ENCODE measurements at regions of chr9 and their contacts with region 1.

Region 1: DNA sequence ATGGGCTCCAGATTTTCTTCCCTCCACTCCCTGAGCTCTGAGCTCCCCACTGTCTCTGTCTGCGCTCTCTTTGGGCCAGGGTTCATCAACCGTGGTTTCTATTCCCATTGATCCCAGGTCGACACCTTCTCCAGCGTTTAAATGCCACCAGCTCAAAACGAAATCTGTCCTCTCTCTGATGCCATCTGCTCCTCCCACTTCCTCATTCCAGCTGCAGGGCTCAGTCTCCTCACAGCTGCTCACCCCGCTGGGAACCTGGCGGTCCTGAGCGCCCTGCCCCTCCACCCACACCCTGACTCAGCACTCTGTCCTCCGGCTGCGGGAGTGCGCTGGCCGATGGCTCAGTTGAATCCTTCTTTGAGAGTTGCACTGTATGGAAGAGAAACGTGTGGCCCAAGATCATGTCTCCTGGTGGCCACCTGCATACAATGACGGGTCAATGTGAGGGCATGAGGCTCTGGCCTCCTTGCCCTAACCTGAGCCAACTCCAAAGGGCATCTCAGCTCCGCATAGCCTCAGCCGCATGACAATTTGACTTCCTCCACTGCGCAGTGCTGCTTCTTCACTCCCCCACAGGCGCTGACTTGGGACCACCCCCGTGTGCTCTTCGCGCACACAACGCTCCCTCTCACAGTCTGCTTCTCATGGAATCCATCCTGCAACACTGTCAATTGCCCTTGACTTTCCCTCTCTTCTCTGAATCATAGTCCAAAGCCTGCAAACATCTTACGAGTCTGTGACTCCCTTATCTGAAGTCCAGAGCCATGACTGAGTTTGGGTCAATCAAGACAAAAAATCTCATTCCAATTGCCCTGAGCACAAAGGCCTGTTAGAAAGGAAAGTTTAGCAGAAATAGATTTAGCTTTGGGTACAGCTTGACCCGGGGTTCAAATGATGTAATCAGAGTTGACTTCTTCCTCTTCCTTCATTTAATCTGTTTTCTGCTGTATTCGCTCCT is 82.4 kb downstream of the PTCH1 start:
- DNase-seq: peak; percentile 88 to 92
- H3K4me3 ChIP-seq: peak overlapping the region; percentile 54; the same call in 1 of the 2 replicates
- H3K27ac ChIP-seq: peak overlapping the region; percentile 98
- H3K4me1 ChIP-seq: 0 out of 2 replicates have a peak, but pooled peaks cover 12% of the 10 kb centered on the region
- H3K27me3 ChIP-seq: no peaks in the 10 kb centered on the region
- CTCF ChIP-seq: peak; percentile 71

Region 2: GRCh38 chr9:95127249-95128176 is 306.9 kb before region 1 on chr9:
- CTCF ChIA-PET with region 1: no interaction called
- POLR2A ChIA-PET with region 1: no interaction called
- intact Hi-C with region 1: loop called (anchors 1 kb)
- DNase-seq: peak; percentile 43 to 83
- H3K4me3 ChIP-seq: no peak overlapping the region
- H3K27ac ChIP-seq: no peak overlapping the region
- H3K4me1 ChIP-seq: no peaks in the 10 kb centered on the region
- H3K27me3 ChIP-seq: no peaks in the 10 kb centered on the region
- CTCF ChIP-seq: peak; percentile 89

Region 3: GRCh38 chr9:95181226-95181818 is 253.1 kb before region 1 on chr9:
- CTCF ChIA-PET with region 1: no interaction called
- POLR2A ChIA-PET with region 1: no interaction called
- intact Hi-C with region 1: no loop called
- DNase-seq: no peak
- H3K4me3 ChIP-seq: no peak overlapping the region
- H3K27ac ChIP-seq: no peak overlapping the region
- H3K4me1 ChIP-seq: no peaks in the 10 kb centered on the region
- H3K27me3 ChIP-seq: no peaks in the 10 kb centered on the region
- CTCF ChIP-seq: peak; percentile 77

Region 4: DNA sequence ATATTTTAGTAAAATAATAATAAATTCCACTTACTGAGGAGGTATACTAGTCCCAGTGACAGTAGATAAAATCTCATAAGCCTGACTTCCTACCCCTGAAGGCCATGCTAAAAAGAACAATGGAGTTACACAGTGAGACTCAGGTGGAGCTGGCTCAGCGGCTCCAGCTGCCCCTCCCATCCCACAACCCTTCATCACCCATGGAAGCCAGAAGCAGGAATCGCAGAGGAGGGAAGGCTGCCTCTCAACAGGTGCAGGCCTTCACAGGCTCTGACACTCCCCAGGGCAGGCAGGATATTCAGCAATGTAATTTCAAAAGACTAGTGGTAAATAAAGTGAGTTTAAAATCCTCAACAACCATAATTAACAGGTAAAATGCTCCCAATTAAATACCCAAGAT is 184.4 kb before region 1 on chr9:
- CTCF ChIA-PET with region 1: interaction called, 10 read pairs
- POLR2A ChIA-PET with region 1: no interaction called
- intact Hi-C with region 1: no loop called
- DNase-seq: peak in 1 of 2 experiments; percentile 26
- H3K4me3 ChIP-seq: no peak overlapping the region
- H3K27ac ChIP-seq: no peak overlapping the region
- H3K4me1 ChIP-seq: no peaks in the 10 kb centered on the region
- H3K27me3 ChIP-seq: no peaks in the 10 kb centered on the region
- CTCF ChIP-seq: no peak

Region 5: DNA sequence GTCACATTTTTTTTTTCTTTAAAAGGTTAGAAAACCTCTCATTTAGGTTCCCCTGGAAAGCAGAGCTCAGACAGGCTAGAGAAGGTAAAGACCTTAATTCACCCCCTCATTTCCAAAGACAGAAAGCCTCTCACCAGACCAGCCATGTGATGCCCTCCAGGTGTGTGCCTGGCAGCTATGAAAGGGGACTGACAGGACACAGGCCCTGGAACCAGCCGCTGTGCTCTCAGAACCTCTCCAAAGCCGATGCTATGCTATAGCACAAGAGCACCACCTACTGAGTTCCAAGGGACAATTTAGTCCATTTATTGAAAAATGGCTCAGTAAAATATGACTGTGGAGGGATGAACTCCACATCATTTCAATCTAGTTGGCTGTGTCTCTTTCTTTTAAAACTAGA is 165.7 kb before region 1 on chr9:
- CTCF ChIA-PET with region 1: interaction called, 3 read pairs
- POLR2A ChIA-PET with region 1: no interaction called
- intact Hi-C with region 1: loop called (anchors 2 kb)
- DNase-seq: no peak
- H3K4me3 ChIP-seq: no peak overlapping the region
- H3K27ac ChIP-seq: no peak overlapping the region
- H3K4me1 ChIP-seq: no peaks in the 10 kb centered on the region
- H3K27me3 ChIP-seq: no peaks in the 10 kb centered on the region
- CTCF ChIP-seq: no peak

Region 6: GRCh38 chr9:95341293-95341962 is 93.0 kb before region 1 on chr9:
- CTCF ChIA-PET with region 1: interaction called, 13 read pairs
- POLR2A ChIA-PET with region 1: no interaction called
- intact Hi-C with region 1: no loop called
- DNase-seq: peak; percentile 25 to 52
- H3K4me3 ChIP-seq: no peak overlapping the region
- H3K27ac ChIP-seq: no peak overlapping the region
- H3K4me1 ChIP-seq: no peaks in the 10 kb centered on the region
- H3K27me3 ChIP-seq: no peaks in the 10 kb centered on the region
- CTCF ChIP-seq: peak; percentile 51

Region 7: GRCh38 chr9:95373069-95373681 is 61.2 kb before region 1 on chr9:
- CTCF ChIA-PET with region 1: no interaction called
- POLR2A ChIA-PET with region 1: no interaction called
- intact Hi-C with region 1: no loop called
- DNase-seq: peak in 1 of 2 experiments; percentile 60
- H3K4me3 ChIP-seq: no peak overlapping the region
- H3K27ac ChIP-seq: peak overlapping the region; percentile 4; the same call in 1 of the 2 replicates
- H3K4me1 ChIP-seq: peaks cover 12% of the 10 kb centered on the region
- H3K27me3 ChIP-seq: no peaks in the 10 kb centered on the region
- CTCF ChIP-seq: no peak

Region 8: DNA sequence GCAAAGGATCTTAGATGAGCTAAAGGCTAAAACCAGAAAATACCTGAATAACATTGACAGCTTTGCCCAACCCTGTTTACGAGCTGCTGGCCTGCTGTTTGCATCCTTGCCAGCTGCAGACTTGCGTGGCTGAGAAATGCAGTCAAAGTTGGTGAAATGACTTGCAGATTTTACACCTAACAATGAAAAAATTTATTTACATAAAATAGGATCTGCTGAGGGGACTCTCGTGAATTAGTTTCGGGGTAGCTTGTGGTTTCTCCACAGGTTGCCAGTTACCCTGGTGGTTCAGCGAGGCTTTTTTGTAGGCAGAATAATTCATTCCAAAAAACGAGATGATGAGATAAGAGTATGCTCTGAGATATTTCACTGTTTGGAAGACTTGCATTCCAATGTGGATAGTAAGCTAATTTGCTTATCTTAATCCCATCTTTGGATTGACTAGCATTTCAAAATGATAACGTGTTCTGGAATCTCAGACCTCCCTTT is 51.2 kb before region 1 on chr9:
- CTCF ChIA-PET with region 1: interaction called, 4 read pairs
- POLR2A ChIA-PET with region 1: no interaction called
- intact Hi-C with region 1: loop called (anchors 2 kb)
- DNase-seq: peak; percentile 83 to 99
- H3K4me3 ChIP-seq: peak overlapping the region; percentile 30; the same call in 1 of the 2 replicates
- H3K27ac ChIP-seq: peak overlapping the region; percentile 99
- H3K4me1 ChIP-seq: peaks cover 61% of the 10 kb centered on the region
- H3K27me3 ChIP-seq: no peaks in the 10 kb centered on the region
- CTCF ChIP-seq: no peak

Measured in PC-9 (cell line).